ENCODE measurements at regions of chr7 and their contacts with region 1.

Region 1: DNA sequence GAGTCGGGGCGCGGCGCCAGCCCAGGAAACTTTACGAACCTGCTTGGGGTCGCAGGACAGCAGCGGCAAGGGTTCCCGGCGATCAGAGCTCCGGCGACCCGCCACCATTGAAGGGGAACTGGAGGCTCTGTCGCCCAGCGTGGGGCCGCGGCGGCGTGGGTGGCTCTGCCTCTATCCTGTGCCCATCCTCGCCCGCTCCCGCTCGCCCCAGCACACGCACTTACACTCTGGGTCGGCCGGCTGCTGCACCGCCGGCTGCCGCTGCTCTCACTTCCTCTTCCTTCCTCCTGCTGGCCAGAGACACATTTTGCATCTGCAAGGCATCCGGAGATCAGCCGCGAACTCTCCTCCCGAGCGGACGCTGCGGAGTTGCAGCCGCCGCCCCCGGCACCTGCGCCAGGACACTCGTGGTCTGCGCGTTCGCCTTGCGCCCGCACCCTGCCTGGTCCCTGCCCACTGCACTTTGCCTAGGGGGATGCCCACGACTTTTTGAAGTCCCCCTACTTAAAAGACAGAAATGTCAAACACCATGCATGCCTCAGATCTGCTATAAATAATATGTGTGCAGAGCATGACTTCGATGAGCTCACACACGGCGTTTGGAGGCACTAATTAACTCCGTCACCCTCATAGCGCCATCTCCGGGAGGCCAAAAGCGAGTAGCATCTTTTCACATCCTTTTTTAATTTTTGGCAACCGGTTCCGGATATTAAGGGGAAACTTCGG is at the start of gene ELMO1:
- DNase-seq: peak; percentile 95
- ATAC-seq: peak; percentile 79
- H3K4me3 ChIP-seq: peak within 1 kb of the TSS; percentile 68 to 94 (median 83)
- H3K4me3 Mint-ChIP-seq: peak within 1 kb of the TSS; percentile 94
- H3K27ac ChIP-seq: peak within 1 kb of the TSS; percentile 83 to 93
- H3K27ac Mint-ChIP-seq: peak within 1 kb of the TSS; percentile 99
- H3K4me1 ChIP-seq: peaks cover 16 to 18% of the 10 kb centered on the region in 2 donors
- H3K4me1 Mint-ChIP-seq: peaks cover 47% of the 10 kb centered on the region
- H3K27me3 ChIP-seq: no peaks in the 10 kb centered on the region
- H3K27me3 Mint-ChIP-seq: no peaks in the 10 kb centered on the region
- CTCF ChIP-seq: peak; percentile 37
- total RNA-seq, gene ELMO1: 166 and 177 TPM in 2 replicates

Region 2: GRCh38 chr7:36366718-36367560 is 1081.9 kb before region 1 on chr7:
- CTCF ChIA-PET with region 1: no interaction called
- POLR2A ChIA-PET with region 1: no interaction called
- intact Hi-C with region 1: loop called (anchors 2 kb)
- DNase-seq: peak; percentile 96
- ATAC-seq: peak; percentile 97
- H3K4me3 ChIP-seq: peak overlapping the region; percentile 58 to 85 (median 65)
- H3K4me3 Mint-ChIP-seq: peak overlapping the region; percentile 97
- H3K27ac ChIP-seq: peak overlapping the region in 1 of 2 donors; percentile 76
- H3K27ac Mint-ChIP-seq: peak overlapping the region; percentile 61
- H3K4me1 ChIP-seq: peaks cover 3 to 8% of the 10 kb centered on the region in 2 donors
- H3K4me1 Mint-ChIP-seq: peaks cover 8% of the 10 kb centered on the region
- H3K27me3 ChIP-seq: peaks cover 0 to 2% (median 1%) of the 10 kb centered on the region in 4 experiments
- H3K27me3 Mint-ChIP-seq: peaks cover 7% of the 10 kb centered on the region
- CTCF ChIP-seq: peak; percentile 86

Region 3: GRCh38 chr7:36831049-36831448 is 617.8 kb before region 1 on chr7:
- CTCF ChIA-PET with region 1: no interaction called
- POLR2A ChIA-PET with region 1: no interaction called
- intact Hi-C with region 1: no loop called
- DNase-seq: no peak
- ATAC-seq: no peak
- H3K4me3 ChIP-seq: no peak overlapping the region
- H3K4me3 Mint-ChIP-seq: no peak overlapping the region
- H3K27ac ChIP-seq: no peak overlapping the region
- H3K27ac Mint-ChIP-seq: no peak overlapping the region
- H3K4me1 ChIP-seq: no peaks in the 10 kb centered on the region
- H3K4me1 Mint-ChIP-seq: no peaks in the 10 kb centered on the region
- H3K27me3 ChIP-seq: no peaks in the 10 kb centered on the region
- H3K27me3 Mint-ChIP-seq: no peaks in the 10 kb centered on the region
- CTCF ChIP-seq: no peak

Region 4: GRCh38 chr7:37208528-37208927 is 240.3 kb before region 1 on chr7:
- CTCF ChIA-PET with region 1: interaction called, 8 read pairs
- POLR2A ChIA-PET with region 1: no interaction called
- intact Hi-C with region 1: loop called (anchors 2 kb)
- DNase-seq: peak; percentile 53
- ATAC-seq: peak; percentile 81
- H3K4me3 ChIP-seq: no peak overlapping the region
- H3K4me3 Mint-ChIP-seq: no peak overlapping the region
- H3K27ac ChIP-seq: peak overlapping the region in 1 of 2 donors; percentile 31
- H3K27ac Mint-ChIP-seq: peak overlapping the region; percentile 32
- H3K4me1 ChIP-seq: peaks cover 7 to 11% of the 10 kb centered on the region in 2 donors
- H3K4me1 Mint-ChIP-seq: peaks cover 15% of the 10 kb centered on the region
- H3K27me3 ChIP-seq: no peaks in the 10 kb centered on the region
- H3K27me3 Mint-ChIP-seq: no peaks in the 10 kb centered on the region
- CTCF ChIP-seq: peak; percentile 63

Region 5: DNA sequence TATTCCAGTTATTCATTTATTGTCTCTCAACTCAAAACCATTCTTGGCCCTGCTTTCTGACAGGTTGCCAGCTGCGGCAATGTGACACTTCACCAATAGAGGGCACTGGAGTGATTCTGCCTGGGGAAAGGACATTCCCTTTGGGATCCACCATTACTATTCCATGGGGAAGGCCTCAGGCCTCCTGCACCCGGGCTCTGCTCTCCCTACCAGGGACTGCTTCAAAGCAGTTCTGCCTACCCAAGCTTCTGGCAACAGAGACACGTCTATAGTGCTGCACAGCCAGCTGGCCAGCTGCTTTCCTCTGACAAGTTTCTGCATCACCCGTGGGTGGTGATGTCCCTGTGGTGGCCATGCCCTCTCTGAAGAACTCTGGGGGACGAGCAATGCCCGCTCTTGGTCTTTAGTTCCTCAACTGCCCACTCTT is 164.0 kb before region 1 on chr7:
- CTCF ChIA-PET with region 1: interaction called, 6 read pairs
- POLR2A ChIA-PET with region 1: interaction called, 6 read pairs
- intact Hi-C with region 1: loop called (anchors 2 kb)
- DNase-seq: peak; percentile 56
- ATAC-seq: peak; percentile 39
- H3K4me3 ChIP-seq: no peak overlapping the region
- H3K4me3 Mint-ChIP-seq: no peak overlapping the region
- H3K27ac ChIP-seq: no peak overlapping the region
- H3K27ac Mint-ChIP-seq: peak overlapping the region; percentile 37
- H3K4me1 ChIP-seq: peaks cover 21 to 23% of the 10 kb centered on the region in 2 donors
- H3K4me1 Mint-ChIP-seq: peaks cover 49% of the 10 kb centered on the region
- H3K27me3 ChIP-seq: no peaks in the 10 kb centered on the region
- H3K27me3 Mint-ChIP-seq: no peaks in the 10 kb centered on the region
- CTCF ChIP-seq: peak; percentile 81

Region 6: GRCh38 chr7:37408291-37409228 is 40.2 kb before region 1 on chr7:
- CTCF ChIA-PET with region 1: interaction called, 10 read pairs
- POLR2A ChIA-PET with region 1: interaction called, 4 read pairs
- intact Hi-C with region 1: loop called (anchors 2 kb)
- DNase-seq: peak; percentile 43
- ATAC-seq: peak; percentile 60
- H3K4me3 ChIP-seq: peak overlapping the region in 4 of 5 experiments; percentile 29 to 65 (median 44)
- H3K4me3 Mint-ChIP-seq: peak overlapping the region; percentile 83
- H3K27ac ChIP-seq: peak overlapping the region; percentile 19 to 64
- H3K27ac Mint-ChIP-seq: peak overlapping the region; percentile 72
- H3K4me1 ChIP-seq: peaks cover 38 to 39% of the 10 kb centered on the region in 2 donors
- H3K4me1 Mint-ChIP-seq: peaks cover 66% of the 10 kb centered on the region
- H3K27me3 ChIP-seq: no peaks in the 10 kb centered on the region
- H3K27me3 Mint-ChIP-seq: no peaks in the 10 kb centered on the region
- CTCF ChIP-seq: no peak

Region 7: DNA sequence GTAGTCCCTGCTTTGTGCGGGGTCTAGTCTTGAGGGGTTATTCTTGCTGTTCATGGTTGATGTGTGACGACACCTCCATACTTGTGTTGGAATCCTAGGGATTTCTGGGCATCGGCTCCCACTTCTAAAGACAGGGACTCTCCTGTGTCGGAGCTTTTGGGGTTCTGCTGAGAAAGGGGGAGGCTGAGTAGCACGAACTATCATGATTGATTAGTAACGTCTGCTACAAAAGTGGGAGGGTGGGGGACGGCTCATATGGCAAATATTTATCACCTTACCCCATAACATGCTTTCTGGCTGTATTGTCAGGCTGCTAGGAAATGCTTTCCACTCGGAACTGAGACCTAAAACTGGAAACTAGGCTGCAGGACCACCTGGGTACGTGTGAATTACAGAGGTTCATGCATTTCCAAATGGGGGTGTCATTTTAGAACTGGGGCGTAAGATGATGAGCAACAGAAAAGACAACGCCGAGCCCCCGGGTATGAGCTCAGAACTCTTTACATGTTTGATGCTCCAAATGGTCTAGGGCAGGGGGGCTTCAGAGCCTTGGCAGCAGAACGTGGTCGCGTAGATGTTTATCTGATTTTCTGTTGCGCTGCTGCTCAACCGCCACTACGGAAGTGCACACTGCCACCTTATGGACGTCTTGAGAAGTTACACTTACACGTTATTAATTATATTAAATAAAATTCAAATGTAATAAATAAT is 384.5 kb after region 1 on chr7:
- CTCF ChIA-PET with region 1: interaction called, 3 read pairs
- POLR2A ChIA-PET with region 1: no interaction called
- intact Hi-C with region 1: loop called (anchors 5 kb)
- DNase-seq: peak; percentile 68
- ATAC-seq: peak; percentile 61
- H3K4me3 ChIP-seq: peak overlapping the region in 4 of 5 experiments; percentile 26 to 53 (median 46)
- H3K4me3 Mint-ChIP-seq: peak overlapping the region; percentile 89
- H3K27ac ChIP-seq: no peak overlapping the region
- H3K27ac Mint-ChIP-seq: peak overlapping the region; percentile 53
- H3K4me1 ChIP-seq: peaks cover 6 to 10% of the 10 kb centered on the region in 2 donors
- H3K4me1 Mint-ChIP-seq: peaks cover 16% of the 10 kb centered on the region
- H3K27me3 ChIP-seq: peaks cover 0 to 6% (median 0%) of the 10 kb centered on the region in 4 experiments
- H3K27me3 Mint-ChIP-seq: peaks cover 8% of the 10 kb centered on the region
- CTCF ChIP-seq: peak; percentile 84